ENCODE measurements at regions of chr7 and their contacts with region 1.

Region 1: DNA sequence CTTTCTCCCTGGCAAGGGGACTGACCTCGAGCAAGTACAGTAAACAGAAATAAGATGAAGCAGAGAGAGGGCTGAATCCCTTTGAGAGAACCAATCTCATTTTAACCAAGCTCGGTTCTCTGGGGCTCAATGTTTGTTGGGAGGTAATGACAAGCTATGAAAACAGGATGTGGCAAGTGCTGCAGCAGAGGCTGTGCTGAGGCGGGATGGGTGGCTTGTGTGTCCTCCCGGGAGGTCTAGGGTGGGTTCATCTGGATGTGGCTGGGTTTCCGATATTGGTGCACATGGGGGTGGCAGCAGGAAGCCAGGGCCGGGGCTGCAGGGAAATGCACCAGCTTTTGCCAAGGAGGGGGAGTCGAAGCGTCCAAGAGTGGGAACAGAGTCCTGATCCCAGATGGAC is 84.5 kb downstream of the AOAH start:
- DNase-seq: peak; percentile 12 to 89 (median 56)
- ATAC-seq: peak; percentile 92
- H3K4me3 ChIP-seq: no peak overlapping the region
- H3K4me3 Mint-ChIP-seq: peak overlapping the region; percentile 65
- H3K27ac ChIP-seq: peak overlapping the region; percentile 62 to 65
- H3K27ac Mint-ChIP-seq: peak overlapping the region; percentile 91
- H3K4me1 ChIP-seq: peaks cover 47% of the 10 kb centered on the region
- H3K4me1 Mint-ChIP-seq: peaks cover 97% of the 10 kb centered on the region
- H3K27me3 ChIP-seq: no peaks in the 10 kb centered on the region
- H3K27me3 Mint-ChIP-seq: no peaks in the 10 kb centered on the region
- CTCF ChIP-seq: no peak

Region 2: DNA sequence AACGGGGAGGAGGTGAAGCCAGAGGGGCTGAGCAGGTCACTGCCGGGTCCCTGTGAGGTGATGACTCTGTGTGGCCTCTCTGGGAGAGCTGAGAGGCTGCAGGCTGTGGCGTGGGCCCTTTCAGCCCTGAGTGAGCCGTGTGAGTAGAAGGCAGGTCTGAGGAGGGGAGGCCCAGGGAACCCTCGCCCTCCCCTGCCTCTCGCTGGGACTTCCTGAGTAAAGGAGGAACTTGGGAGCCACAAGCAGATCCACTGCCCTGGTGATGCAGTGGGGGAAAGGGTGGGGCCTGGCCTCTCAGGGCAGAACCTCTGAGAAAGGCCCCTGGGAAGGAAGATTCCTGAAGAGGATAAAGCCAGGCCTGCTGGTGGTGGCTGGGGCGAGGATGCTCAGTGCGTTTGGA is 463.9 kb before region 1 on chr7:
- CTCF ChIA-PET with region 1: no interaction called
- POLR2A ChIA-PET with region 1: no interaction called
- intact Hi-C with region 1: loop called in 1 of 2 experiments (anchors 10 kb)
- DNase-seq: peak in 2 of 14 experiments; percentile 50 to 61
- ATAC-seq: no peak
- H3K4me3 ChIP-seq: no peak overlapping the region
- H3K4me3 Mint-ChIP-seq: no peak overlapping the region
- H3K27ac ChIP-seq: no peak overlapping the region
- H3K27ac Mint-ChIP-seq: no peak overlapping the region
- H3K4me1 ChIP-seq: no peaks in the 10 kb centered on the region
- H3K4me1 Mint-ChIP-seq: peaks cover 14% of the 10 kb centered on the region
- H3K27me3 ChIP-seq: no peaks in the 10 kb centered on the region
- H3K27me3 Mint-ChIP-seq: no peaks in the 10 kb centered on the region
- CTCF ChIP-seq: no peak

Region 3: GRCh38 chr7:36430186-36430585 is 209.6 kb before region 1 on chr7:
- CTCF ChIA-PET with region 1: no interaction called
- POLR2A ChIA-PET with region 1: no interaction called
- intact Hi-C with region 1: no loop called
- DNase-seq: no peak
- ATAC-seq: no peak
- H3K4me3 ChIP-seq: no peak overlapping the region
- H3K4me3 Mint-ChIP-seq: no peak overlapping the region
- H3K27ac ChIP-seq: no peak overlapping the region
- H3K27ac Mint-ChIP-seq: no peak overlapping the region
- H3K4me1 ChIP-seq: no peaks in the 10 kb centered on the region
- H3K4me1 Mint-ChIP-seq: no peaks in the 10 kb centered on the region
- H3K27me3 ChIP-seq: no peaks in the 10 kb centered on the region
- H3K27me3 Mint-ChIP-seq: no peaks in the 10 kb centered on the region
- CTCF ChIP-seq: no peak

Region 4: GRCh38 chr7:36605261-36606051 is 34.4 kb before region 1 on chr7:
- CTCF ChIA-PET with region 1: no interaction called
- POLR2A ChIA-PET with region 1: interaction called, 22 read pairs
- intact Hi-C with region 1: no loop called
- DNase-seq: peak in 2 of 14 experiments; percentile 7 to 10
- ATAC-seq: no peak
- H3K4me3 ChIP-seq: no peak overlapping the region
- H3K4me3 Mint-ChIP-seq: peak overlapping the region; percentile 25
- H3K27ac ChIP-seq: no peak overlapping the region
- H3K27ac Mint-ChIP-seq: peak overlapping the region; percentile 85
- H3K4me1 ChIP-seq: peaks cover 5% of the 10 kb centered on the region
- H3K4me1 Mint-ChIP-seq: peaks cover 71% of the 10 kb centered on the region
- H3K27me3 ChIP-seq: no peaks in the 10 kb centered on the region
- H3K27me3 Mint-ChIP-seq: no peaks in the 10 kb centered on the region
- CTCF ChIP-seq: no peak

Region 5: GRCh38 chr7:36653008-36653670 is 13.3 kb after region 1 on chr7:
- CTCF ChIA-PET with region 1: no interaction called
- POLR2A ChIA-PET with region 1: interaction called, 14 read pairs
- intact Hi-C with region 1: no loop called
- DNase-seq: no peak
- ATAC-seq: no peak
- H3K4me3 ChIP-seq: no peak overlapping the region
- H3K4me3 Mint-ChIP-seq: no peak overlapping the region
- H3K27ac ChIP-seq: no peak overlapping the region
- H3K27ac Mint-ChIP-seq: peak overlapping the region; percentile 40
- H3K4me1 ChIP-seq: peaks cover 8% of the 10 kb centered on the region
- H3K4me1 Mint-ChIP-seq: peaks cover 52% of the 10 kb centered on the region
- H3K27me3 ChIP-seq: no peaks in the 10 kb centered on the region
- H3K27me3 Mint-ChIP-seq: no peaks in the 10 kb centered on the region
- CTCF ChIP-seq: no peak

Region 6: DNA sequence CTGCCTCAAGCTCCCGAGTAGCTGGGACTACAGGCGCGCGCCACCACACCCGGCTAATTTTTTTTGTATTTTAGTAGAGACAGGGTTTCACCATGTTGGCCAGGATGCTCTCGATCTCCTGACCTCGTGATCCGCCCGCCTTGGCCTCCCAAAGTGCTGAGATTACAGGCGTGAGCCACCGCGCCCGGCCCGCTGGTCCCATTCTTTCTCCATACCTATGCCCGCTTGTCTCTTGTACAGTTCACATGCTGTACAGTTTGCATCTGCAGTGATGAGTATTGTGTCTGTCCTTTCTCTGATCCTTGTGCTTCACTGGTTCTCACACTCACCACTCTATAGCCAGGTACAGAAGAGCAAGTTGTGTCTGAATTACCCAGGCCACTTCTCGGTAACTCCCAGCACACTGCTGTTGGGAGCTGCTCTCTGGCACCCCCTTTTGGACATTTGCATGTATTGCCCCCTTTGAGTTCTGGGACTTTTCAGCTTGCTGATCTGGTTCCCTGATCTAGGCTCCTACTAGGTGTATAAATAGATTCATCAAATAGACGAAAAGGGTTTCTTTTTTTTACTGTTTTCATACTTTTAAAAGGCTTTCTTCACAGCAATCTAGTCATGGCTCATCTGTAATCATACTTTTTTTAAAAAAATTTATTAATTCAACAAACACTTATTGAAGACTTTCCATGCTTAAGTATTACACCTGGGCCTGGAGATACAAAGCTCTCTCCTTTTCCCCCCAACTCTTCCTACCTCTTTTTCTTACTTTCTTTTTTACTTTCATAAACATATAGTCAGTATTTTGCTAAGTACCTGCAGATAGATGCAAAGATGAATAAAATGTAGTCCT is 31.0 kb after region 1 on chr7:
- CTCF ChIA-PET with region 1: interaction called, 3 read pairs
- POLR2A ChIA-PET with region 1: interaction called, 9 read pairs
- intact Hi-C with region 1: loop called in 1 of 2 experiments (anchors 2 kb)
- DNase-seq: peak; percentile 50 to 89 (median 60)
- ATAC-seq: peak; percentile 99
- H3K4me3 ChIP-seq: no peak overlapping the region
- H3K4me3 Mint-ChIP-seq: no peak overlapping the region
- H3K27ac ChIP-seq: no peak overlapping the region
- H3K27ac Mint-ChIP-seq: no peak overlapping the region
- H3K4me1 ChIP-seq: peaks cover 5% of the 10 kb centered on the region
- H3K4me1 Mint-ChIP-seq: peaks cover 42% of the 10 kb centered on the region
- H3K27me3 ChIP-seq: no peaks in the 10 kb centered on the region
- H3K27me3 Mint-ChIP-seq: no peaks in the 10 kb centered on the region
- CTCF ChIP-seq: peak; percentile 89

Region 7: DNA sequence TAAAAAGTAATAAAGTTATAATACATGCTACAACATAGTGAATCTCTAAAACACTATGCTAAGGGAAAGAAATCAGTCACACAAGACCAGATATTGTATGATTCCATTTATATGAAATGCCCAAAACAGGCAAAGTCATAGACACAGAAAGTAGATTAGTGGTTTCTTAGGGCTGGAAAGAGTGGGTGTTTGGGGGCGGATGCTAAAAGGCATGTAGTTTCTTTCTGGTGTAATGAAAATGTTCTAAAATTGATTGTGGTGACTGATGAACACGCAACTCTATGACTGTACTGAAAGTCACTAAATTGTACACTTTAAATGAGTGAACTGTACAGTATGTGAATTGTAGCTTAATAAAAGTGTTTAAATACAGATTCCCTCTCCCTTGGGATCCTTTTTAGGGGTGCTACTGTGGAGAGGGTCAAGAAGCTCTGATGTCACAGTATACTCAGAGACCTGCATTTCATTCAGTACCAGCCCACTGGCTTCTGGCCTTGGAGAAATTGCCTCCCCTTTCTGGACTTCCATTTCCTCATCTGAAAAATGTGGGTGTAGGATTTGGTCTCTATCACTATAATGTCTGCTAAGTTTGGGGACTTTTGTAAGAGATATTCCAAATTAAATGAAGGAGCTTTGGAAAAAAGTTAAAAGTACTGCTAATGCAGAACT is 38.1 kb after region 1 on chr7:
- CTCF ChIA-PET with region 1: no interaction called
- POLR2A ChIA-PET with region 1: interaction called, 26 read pairs
- intact Hi-C with region 1: no loop called
- DNase-seq: peak in 2 of 14 experiments; percentile 26 to 48
- ATAC-seq: peak; percentile 39
- H3K4me3 ChIP-seq: no peak overlapping the region
- H3K4me3 Mint-ChIP-seq: peak overlapping the region; percentile 76
- H3K27ac ChIP-seq: peak overlapping the region; percentile 31 to 38
- H3K27ac Mint-ChIP-seq: peak overlapping the region; percentile 90
- H3K4me1 ChIP-seq: peaks cover 15% of the 10 kb centered on the region
- H3K4me1 Mint-ChIP-seq: peaks cover 58% of the 10 kb centered on the region
- H3K27me3 ChIP-seq: no peaks in the 10 kb centered on the region
- H3K27me3 Mint-ChIP-seq: no peaks in the 10 kb centered on the region
- CTCF ChIP-seq: no peak

Region 8: GRCh38 chr7:36784991-36785940 is 145.4 kb after region 1 on chr7:
- CTCF ChIA-PET with region 1: no interaction called
- POLR2A ChIA-PET with region 1: interaction called, 3 read pairs
- intact Hi-C with region 1: loop called in 1 of 2 experiments (anchors 2 kb)
- DNase-seq: peak; percentile 41 to 93 (median 58)
- ATAC-seq: peak; percentile 79
- H3K4me3 ChIP-seq: no peak overlapping the region
- H3K4me3 Mint-ChIP-seq: peak overlapping the region; percentile 53
- H3K27ac ChIP-seq: peak overlapping the region; percentile 61 to 71
- H3K27ac Mint-ChIP-seq: peak overlapping the region; percentile 86
- H3K4me1 ChIP-seq: peaks cover 63% of the 10 kb centered on the region
- H3K4me1 Mint-ChIP-seq: peaks cover 82% of the 10 kb centered on the region
- H3K27me3 ChIP-seq: no peaks in the 10 kb centered on the region
- H3K27me3 Mint-ChIP-seq: no peaks in the 10 kb centered on the region
- CTCF ChIP-seq: no peak

Region 9: DNA sequence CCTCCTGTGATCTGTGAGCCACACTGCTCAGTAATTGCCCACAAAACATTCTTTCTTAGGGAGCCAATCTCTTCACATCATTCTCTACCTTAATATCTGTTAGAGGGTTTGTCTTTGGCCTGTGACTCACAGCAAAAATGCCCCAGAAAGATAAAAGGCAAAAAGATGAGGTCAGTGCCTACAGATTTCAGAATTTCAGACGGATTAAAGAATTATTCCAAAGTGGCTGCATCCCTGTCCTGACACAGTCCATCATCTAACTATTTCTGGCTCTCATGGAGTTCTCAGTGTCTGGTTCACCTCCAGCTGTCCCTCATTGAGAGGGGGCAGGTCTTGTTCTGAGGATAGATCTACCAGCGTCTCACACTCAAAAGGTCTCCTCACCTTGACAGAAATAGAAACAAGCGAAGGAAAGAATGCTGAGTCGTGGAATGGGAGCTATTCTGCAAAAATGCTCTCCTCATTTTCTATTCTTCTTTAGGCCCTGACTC is 223.0 kb after region 1 on chr7:
- CTCF ChIA-PET with region 1: no interaction called
- POLR2A ChIA-PET with region 1: no interaction called
- intact Hi-C with region 1: no loop called
- DNase-seq: no peak
- ATAC-seq: no peak
- H3K4me3 ChIP-seq: no peak overlapping the region
- H3K4me3 Mint-ChIP-seq: no peak overlapping the region
- H3K27ac ChIP-seq: no peak overlapping the region
- H3K27ac Mint-ChIP-seq: no peak overlapping the region
- H3K4me1 ChIP-seq: peaks cover 7% of the 10 kb centered on the region
- H3K4me1 Mint-ChIP-seq: peaks cover 29% of the 10 kb centered on the region
- H3K27me3 ChIP-seq: no peaks in the 10 kb centered on the region
- H3K27me3 Mint-ChIP-seq: no peaks in the 10 kb centered on the region
- CTCF ChIP-seq: no peak

Measured in CD4-positive, alpha-beta T cell (primary cell).